Activated B cell treated with CpG ODN at 0.5 μM for 24 hours (primary cell): ENCODE measurements at regions of chr6 and their contacts with region 1.

Region 1: GRCh38 chr6:43667245-43668150 is 20.1 kb downstream of the MRPS18A start:
- DNase-seq: peak; percentile 84
- ATAC-seq: peak; percentile 80
- H3K4me3 Mint-ChIP-seq: peak overlapping the region; percentile 36
- H3K27ac Mint-ChIP-seq: peak overlapping the region; percentile 64
- H3K4me1 Mint-ChIP-seq: peaks cover 18% of the 10 kb centered on the region
- H3K27me3 Mint-ChIP-seq: no peaks in the 10 kb centered on the region
- CTCF ChIP-seq: peak; percentile 42

Region 2: DNA sequence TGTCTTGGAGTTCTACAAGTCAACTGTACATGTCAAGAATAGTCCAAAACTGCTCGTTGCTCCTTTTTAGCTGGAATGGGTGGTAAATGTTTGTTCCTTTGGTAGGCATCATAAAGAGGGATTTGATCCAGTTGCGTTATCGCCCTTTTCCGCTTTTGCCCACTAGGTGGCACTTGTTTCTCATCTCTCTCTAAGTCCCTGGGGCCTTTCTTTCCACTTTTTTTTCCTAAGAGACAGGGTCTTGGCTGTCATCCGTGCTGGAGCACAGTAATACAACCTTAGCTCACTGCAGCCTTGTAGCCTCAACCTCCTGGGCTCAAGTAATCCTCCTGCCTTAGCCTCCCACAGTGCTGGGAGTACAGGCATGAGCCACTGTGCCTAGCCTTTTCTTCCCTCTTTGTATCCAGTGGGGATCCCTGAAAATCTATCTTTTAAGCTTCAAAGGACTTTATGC is 59.2 kb before region 1 on chr6:
- CTCF ChIA-PET with region 1: interaction called, 6 read pairs
- POLR2A ChIA-PET with region 1: no interaction called
- intact Hi-C with region 1: loop called (anchors 1 kb)
- DNase-seq: peak; percentile 30
- ATAC-seq: peak; percentile 50
- H3K4me3 Mint-ChIP-seq: no peak overlapping the region
- H3K27ac Mint-ChIP-seq: peak overlapping the region; percentile 47
- H3K4me1 Mint-ChIP-seq: peaks cover 14% of the 10 kb centered on the region
- H3K27me3 Mint-ChIP-seq: no peaks in the 10 kb centered on the region
- CTCF ChIP-seq: peak; percentile 88

Region 3: GRCh38 chr6:43714311-43715055 is 47.0 kb after region 1 on chr6:
- CTCF ChIA-PET with region 1: interaction called, 7 read pairs
- POLR2A ChIA-PET with region 1: interaction called, 21 read pairs
- intact Hi-C with region 1: loop called (anchors 1 kb)
- DNase-seq: peak; percentile 65
- ATAC-seq: peak; percentile 15
- H3K4me3 Mint-ChIP-seq: peak overlapping the region; percentile 81
- H3K27ac Mint-ChIP-seq: peak overlapping the region; percentile 91
- H3K4me1 Mint-ChIP-seq: peaks cover 60% of the 10 kb centered on the region
- H3K27me3 Mint-ChIP-seq: no peaks in the 10 kb centered on the region
- CTCF ChIP-seq: no peak

Region 4: GRCh38 chr6:43758617-43759050 is 91.1 kb after region 1 on chr6:
- CTCF ChIA-PET with region 1: interaction called, 28 read pairs
- POLR2A ChIA-PET with region 1: no interaction called
- intact Hi-C with region 1: loop called (anchors 1 kb)
- DNase-seq: peak; percentile 33
- ATAC-seq: peak; percentile 73
- H3K4me3 Mint-ChIP-seq: no peak overlapping the region
- H3K27ac Mint-ChIP-seq: no peak overlapping the region
- H3K4me1 Mint-ChIP-seq: peaks cover 7% of the 10 kb centered on the region
- H3K27me3 Mint-ChIP-seq: peaks cover 7% of the 10 kb centered on the region
- CTCF ChIP-seq: no peak

Region 5: GRCh38 chr6:43817192-43817591 is 149.7 kb after region 1 on chr6:
- CTCF ChIA-PET with region 1: no interaction called
- POLR2A ChIA-PET with region 1: no interaction called
- intact Hi-C with region 1: loop called (anchors 1 kb)
- DNase-seq: no peak
- ATAC-seq: peak; percentile 71
- H3K4me3 Mint-ChIP-seq: no peak overlapping the region
- H3K27ac Mint-ChIP-seq: no peak overlapping the region
- H3K4me1 Mint-ChIP-seq: no peaks in the 10 kb centered on the region
- H3K27me3 Mint-ChIP-seq: peaks cover 19% of the 10 kb centered on the region
- CTCF ChIP-seq: no peak

Region 6: GRCh38 chr6:44002593-44003344 is 335.3 kb after region 1 on chr6:
- CTCF ChIA-PET with region 1: no interaction called
- POLR2A ChIA-PET with region 1: no interaction called
- intact Hi-C with region 1: loop called (anchors 5 kb)
- DNase-seq: peak; percentile 49
- ATAC-seq: peak; percentile 61
- H3K4me3 Mint-ChIP-seq: peak overlapping the region; percentile 76
- H3K27ac Mint-ChIP-seq: no peak overlapping the region
- H3K4me1 Mint-ChIP-seq: peaks cover 20% of the 10 kb centered on the region
- H3K27me3 Mint-ChIP-seq: peaks cover 49% of the 10 kb centered on the region
- CTCF ChIP-seq: no peak

Region 7: DNA sequence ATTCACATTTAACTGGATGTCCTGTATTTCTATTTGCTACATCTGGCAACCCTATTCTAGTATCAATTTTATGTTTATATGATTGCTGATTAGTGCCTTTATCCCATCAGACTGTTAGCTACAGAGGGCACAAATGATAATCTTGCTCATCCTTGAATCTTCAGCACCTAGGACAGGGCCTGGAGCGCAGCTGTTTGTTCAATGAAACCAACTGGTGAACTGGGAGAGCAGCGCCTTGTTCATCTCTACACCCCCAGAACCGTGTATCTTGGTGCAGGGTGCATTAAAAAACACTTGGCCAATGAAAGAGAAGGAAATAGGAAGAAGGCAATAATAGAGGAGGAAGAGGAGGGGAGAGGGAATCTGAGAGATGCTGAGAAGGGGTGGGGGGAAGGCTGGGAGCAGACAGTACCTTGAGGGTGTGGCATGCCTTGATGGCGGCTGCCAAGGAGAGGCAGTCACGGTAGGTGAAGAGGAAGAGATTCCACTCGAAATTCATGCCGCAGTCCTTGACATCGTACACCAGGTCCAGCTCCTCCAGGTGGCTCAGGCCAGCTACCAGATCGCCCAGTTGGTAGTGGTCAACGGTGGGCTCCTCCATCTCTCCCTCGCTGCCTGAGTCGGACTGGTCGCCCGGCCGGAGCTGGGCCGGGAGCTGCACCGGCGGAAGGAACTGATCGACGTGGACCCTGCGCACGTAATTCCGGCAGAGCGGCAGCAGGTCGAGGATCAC is 618.2 kb after region 1 on chr6:
- CTCF ChIA-PET with region 1: no interaction called
- POLR2A ChIA-PET with region 1: no interaction called
- intact Hi-C with region 1: no loop called
- DNase-seq: no peak
- ATAC-seq: no peak
- H3K4me3 Mint-ChIP-seq: no peak overlapping the region
- H3K27ac Mint-ChIP-seq: no peak overlapping the region
- H3K4me1 Mint-ChIP-seq: no peaks in the 10 kb centered on the region
- H3K27me3 Mint-ChIP-seq: peaks cover 53% of the 10 kb centered on the region
- CTCF ChIP-seq: no peak